Activated B cell treated with CpG ODN at 0.5 μM for 24 hours (primary cell): ENCODE measurements at regions of chr7 and their contacts with region 1.

Region 1: DNA sequence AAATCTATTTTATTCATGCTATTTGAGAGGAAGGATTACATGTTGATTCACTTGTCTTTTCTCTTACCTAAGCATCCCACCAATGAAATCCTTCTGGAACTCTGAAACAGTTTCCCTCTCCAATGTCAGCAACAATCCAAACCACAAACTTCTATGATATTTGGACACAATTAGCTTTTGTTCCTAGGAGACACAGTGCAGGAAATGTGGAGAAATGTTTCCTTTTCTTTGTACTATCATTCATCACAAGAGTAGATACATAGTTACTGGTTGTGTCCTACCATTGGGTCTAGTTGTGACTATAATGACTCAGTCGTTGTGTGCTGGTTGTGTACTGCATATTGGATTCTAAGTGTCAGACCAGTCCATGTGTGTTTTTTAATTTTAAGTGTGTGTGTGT is 156.8 kb upstream of the MAGI2 start:
- DNase-seq: no peak
- ATAC-seq: no peak
- H3K4me3 Mint-ChIP-seq: no peak overlapping the region
- H3K27ac Mint-ChIP-seq: no peak overlapping the region
- H3K4me1 Mint-ChIP-seq: no peaks in the 10 kb centered on the region
- H3K27me3 Mint-ChIP-seq: no peaks in the 10 kb centered on the region
- CTCF ChIP-seq: no peak

Region 2: DNA sequence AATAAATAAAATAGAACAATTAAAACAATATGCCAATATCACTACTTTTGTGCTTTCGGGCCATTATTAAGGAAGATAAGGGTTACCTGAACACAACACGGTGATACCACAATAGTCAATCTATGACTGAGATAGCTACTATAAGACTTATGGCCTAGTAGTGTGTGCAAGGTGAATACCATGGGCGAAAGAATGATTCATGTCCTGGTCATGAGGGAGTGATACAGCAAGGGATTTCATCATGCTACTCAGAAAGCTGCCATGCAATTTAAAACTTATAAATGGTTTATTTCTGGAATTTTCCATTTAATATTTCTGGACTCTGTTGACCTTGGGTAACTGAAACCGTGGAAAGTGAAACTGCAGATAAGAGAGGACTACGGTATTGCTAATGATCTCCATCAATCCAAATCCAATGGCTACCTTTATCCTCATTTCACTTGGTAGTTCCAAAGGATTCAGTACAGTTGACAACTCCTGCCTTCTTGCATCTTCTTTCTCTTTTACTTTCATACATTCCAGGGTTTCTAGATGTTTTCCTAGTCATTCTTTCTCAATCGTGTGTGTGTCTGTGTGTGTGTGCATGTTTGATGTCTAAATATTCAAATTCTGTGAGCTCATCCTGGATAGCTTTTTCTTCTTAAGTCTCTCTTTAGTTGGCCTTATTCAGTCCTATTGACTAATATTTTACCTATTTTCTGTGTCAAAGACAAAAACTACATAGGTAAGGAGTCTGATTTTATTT is 56.3 kb before region 1 on chr7:
- CTCF ChIA-PET with region 1: no interaction called
- POLR2A ChIA-PET with region 1: no interaction called
- intact Hi-C with region 1: loop called (anchors 10 kb)
- DNase-seq: no peak
- ATAC-seq: no peak
- H3K4me3 Mint-ChIP-seq: no peak overlapping the region
- H3K27ac Mint-ChIP-seq: no peak overlapping the region
- H3K4me1 Mint-ChIP-seq: no peaks in the 10 kb centered on the region
- H3K27me3 Mint-ChIP-seq: no peaks in the 10 kb centered on the region
- CTCF ChIP-seq: no peak

Region 3: DNA sequence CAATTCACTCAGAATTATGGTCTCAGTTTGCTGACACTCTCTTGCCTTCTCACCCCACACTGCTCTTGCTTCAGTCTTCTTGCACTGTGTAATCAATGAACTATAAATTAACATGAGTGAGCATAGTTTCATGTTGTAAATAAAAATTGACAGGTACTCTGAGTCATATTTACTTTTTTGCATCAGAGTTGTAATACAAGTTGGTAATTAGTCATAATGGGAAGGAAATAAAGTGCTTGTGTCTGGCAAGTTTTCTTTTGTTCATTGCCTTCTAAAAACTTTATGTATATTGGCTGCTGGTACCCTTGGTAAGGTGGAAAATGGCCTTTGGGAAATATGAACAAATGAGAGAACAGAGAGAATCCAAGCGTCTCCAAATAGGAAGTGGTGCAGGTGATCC is 12.5 kb after region 1 on chr7:
- CTCF ChIA-PET with region 1: no interaction called
- POLR2A ChIA-PET with region 1: no interaction called
- intact Hi-C with region 1: no loop called
- DNase-seq: no peak
- ATAC-seq: no peak
- H3K4me3 Mint-ChIP-seq: no peak overlapping the region
- H3K27ac Mint-ChIP-seq: no peak overlapping the region
- H3K4me1 Mint-ChIP-seq: no peaks in the 10 kb centered on the region
- H3K27me3 Mint-ChIP-seq: no peaks in the 10 kb centered on the region
- CTCF ChIP-seq: no peak

Region 4: GRCh38 chr7:80288175-80289122 is 678.1 kb after region 1 on chr7:
- CTCF ChIA-PET with region 1: no interaction called
- POLR2A ChIA-PET with region 1: no interaction called
- intact Hi-C with region 1: no loop called
- DNase-seq: no peak
- ATAC-seq: no peak
- H3K4me3 Mint-ChIP-seq: no peak overlapping the region
- H3K27ac Mint-ChIP-seq: no peak overlapping the region
- H3K4me1 Mint-ChIP-seq: no peaks in the 10 kb centered on the region
- H3K27me3 Mint-ChIP-seq: no peaks in the 10 kb centered on the region
- CTCF ChIP-seq: no peak